Aorta (tissue), 5 donors: ENCODE measurements at regions of chr13 and their contacts with region 1.

Region 1: GRCh38 chr13:47774671-47774994 is 226.4 kb downstream of the SUCLA2 start:
- DNase-seq: no peak
- ATAC-seq: no peak
- H3K4me3 ChIP-seq: no peak overlapping the region
- H3K27ac ChIP-seq: no peak overlapping the region
- H3K4me1 ChIP-seq: no peaks in the 10 kb centered on the region
- H3K27me3 ChIP-seq: peaks cover 0 to 2% of the 10 kb centered on the region in 2 donors

Region 2: DNA sequence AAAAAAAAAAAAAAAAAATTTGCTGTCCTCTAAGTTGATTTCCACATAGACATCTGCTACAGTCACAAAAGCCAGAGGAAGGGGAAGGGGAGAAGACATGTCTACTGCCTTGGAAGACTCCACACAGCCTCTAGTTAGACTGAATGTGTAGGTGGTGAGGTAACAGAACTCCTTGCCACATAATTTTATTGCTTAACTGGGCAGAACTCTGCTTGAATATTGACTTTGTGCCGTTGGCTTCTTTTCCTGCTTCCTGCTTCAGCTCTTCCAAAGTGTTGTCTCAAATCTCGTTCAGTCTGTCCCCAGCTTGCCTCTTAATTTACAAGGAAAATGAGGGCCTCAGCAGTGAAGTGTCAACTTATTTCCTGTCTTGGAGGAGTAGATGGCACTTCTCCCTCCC is 1014.8 kb before region 1 on chr13:
- intact Hi-C with region 1: loop called in 1 of 2 experiments (anchors 10 kb)
- DNase-seq: no peak
- ATAC-seq: peak; percentile 48
- H3K4me3 ChIP-seq: no peak overlapping the region
- H3K27ac ChIP-seq: peak overlapping the region; percentile 62 to 82
- H3K4me1 ChIP-seq: peaks cover 2 to 6% of the 10 kb centered on the region in 2 donors
- H3K27me3 ChIP-seq: no peaks in the 10 kb centered on the region

Region 3: GRCh38 chr13:46961719-46962118 is 812.9 kb before region 1 on chr13:
- intact Hi-C with region 1: no loop called
- DNase-seq: no peak
- ATAC-seq: no peak
- H3K4me3 ChIP-seq: no peak overlapping the region
- H3K27ac ChIP-seq: no peak overlapping the region
- H3K4me1 ChIP-seq: no peaks in the 10 kb centered on the region
- H3K27me3 ChIP-seq: no peaks in the 10 kb centered on the region

Region 4: DNA sequence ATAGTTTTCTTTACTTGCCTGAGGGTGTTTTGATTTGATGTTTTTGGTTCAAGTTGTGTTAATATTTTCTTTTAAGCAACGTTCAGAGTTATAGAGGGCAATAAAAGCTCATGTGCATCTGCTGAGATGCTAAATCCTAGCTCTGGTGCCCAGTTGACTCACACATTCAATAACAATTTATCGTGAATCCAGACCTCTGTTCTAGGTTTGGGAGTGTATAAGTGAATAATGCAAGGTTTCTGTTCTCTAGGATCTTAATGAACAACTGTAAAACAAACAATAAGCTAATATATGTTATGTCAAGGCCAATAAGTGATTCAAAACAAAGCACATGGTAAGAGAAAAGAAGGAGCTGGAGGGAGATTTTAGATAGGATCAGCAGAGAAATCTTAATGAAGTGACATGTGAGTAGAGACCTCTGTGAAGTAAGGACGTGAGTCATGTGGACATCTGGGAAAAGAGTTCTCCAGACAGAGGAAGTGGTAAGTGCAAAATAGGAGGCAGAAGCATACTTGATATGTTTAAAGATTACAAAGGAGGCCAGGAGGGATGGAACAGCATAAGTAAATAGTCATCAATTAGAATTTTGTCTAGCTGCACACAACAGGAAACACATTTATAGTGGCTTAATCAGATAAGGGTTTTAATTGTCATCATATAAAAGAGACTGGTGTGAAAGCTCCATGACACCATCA is 599.3 kb before region 1 on chr13:
- intact Hi-C with region 1: no loop called
- DNase-seq: no peak
- ATAC-seq: no peak
- H3K4me3 ChIP-seq: no peak overlapping the region
- H3K27ac ChIP-seq: no peak overlapping the region
- H3K4me1 ChIP-seq: no peaks in the 10 kb centered on the region
- H3K27me3 ChIP-seq: no peaks in the 10 kb centered on the region